Heart left ventricle (tissue), 16 donors: ENCODE measurements at regions of chr2 and their contacts with region 1.

Region 1: GRCh38 chr2:66429071-66429477 is 5.9 kb upstream of the MEIS1 start:
- DNase-seq: peak in 1 of 5 donors; percentile 18
- ATAC-seq: no peak
- H3K4me3 ChIP-seq: no peak overlapping the region
- H3K27ac ChIP-seq: peak overlapping the region in 1 of 12 donors; percentile 6
- H3K4me1 ChIP-seq: peaks cover 0 to 17% (median 5%) of the 10 kb centered on the region in 12 donors
- H3K27me3 ChIP-seq: peaks cover 0 to 75% (median 40%) of the 10 kb centered on the region in 9 donors
- CTCF ChIP-seq: peak; percentile 55 to 86 (median 72)
- POLR2A ChIP-seq: no peak

Region 2: GRCh38 chr2:65432227-65433190 is 996.6 kb before region 1 on chr2 and contains the start of gene SPRED2:
- intact Hi-C with region 1: no loop called
- DNase-seq: peak; percentile 95 to 97 (median 97)
- ATAC-seq: peak; percentile 55 to 77 (median 62)
- H3K4me3 ChIP-seq: peak within 1 kb of the TSS; percentile 58 to 98 (median 89)
- H3K27ac ChIP-seq: peak within 1 kb of the TSS; percentile 88 to 98 (median 92)
- H3K4me1 ChIP-seq: peaks cover 0 to 46% (median 28%) of the 10 kb centered on the region in 12 donors
- H3K27me3 ChIP-seq: peaks cover 0 to 4% (median 0%) of the 10 kb centered on the region in 9 donors
- CTCF ChIP-seq: peak in 4 of 12 donors; percentile 17 to 41 (median 26)
- POLR2A ChIP-seq: peak in 1 of 2 donors; percentile 66
- total RNA-seq, gene SPRED2: 10.2 to 24.4 (median 17.5) TPM

Region 3: DNA sequence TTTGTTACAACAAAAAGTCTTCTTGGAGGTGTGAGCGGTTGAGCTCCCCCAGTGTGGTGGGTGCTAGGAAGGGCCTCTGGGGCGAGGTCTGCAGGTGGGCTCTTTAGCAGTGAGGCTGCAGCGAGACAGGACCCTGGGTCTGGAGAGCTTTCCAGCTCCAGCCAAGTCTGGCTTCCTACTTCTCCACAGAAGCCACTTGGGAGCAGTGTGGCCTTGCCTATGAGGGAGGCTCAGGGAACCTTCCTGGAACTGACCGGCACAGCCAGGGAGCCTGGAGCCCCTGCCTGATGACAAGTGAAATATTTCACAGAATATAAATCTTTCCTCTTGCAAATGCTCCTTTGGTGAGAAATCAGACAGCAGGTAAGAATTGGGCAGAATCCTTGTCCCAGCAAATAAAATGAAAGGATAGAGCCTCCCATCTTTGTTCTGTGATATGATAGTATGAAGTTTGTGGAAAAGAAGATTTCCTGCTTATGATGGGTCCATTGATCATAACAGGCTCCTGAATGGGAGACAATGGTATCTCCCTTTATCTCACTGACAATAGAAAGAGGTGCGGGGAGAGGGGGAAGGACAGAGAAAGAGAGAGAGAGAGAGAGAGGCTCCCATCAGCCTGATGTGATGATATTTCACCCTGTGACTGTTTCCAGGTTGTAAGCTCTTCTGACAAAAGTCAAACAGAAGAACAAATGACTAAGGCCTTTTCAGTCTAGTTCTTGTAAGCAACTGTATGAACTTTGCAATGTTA is 706.9 kb before region 1 on chr2:
- intact Hi-C with region 1: loop called in 4 of 10 experiments (anchors 10 kb)
- DNase-seq: peak; percentile 33 to 63 (median 47)
- ATAC-seq: peak; percentile 86 to 92 (median 89)
- H3K4me3 ChIP-seq: no peak overlapping the region
- H3K27ac ChIP-seq: no peak overlapping the region
- H3K4me1 ChIP-seq: no peaks in the 10 kb centered on the region
- H3K27me3 ChIP-seq: peaks cover 0 to 5% (median 0%) of the 10 kb centered on the region in 9 donors
- CTCF ChIP-seq: peak in 11 of 12 donors; percentile 7 to 60 (median 41)
- POLR2A ChIP-seq: no peak

Region 4: DNA sequence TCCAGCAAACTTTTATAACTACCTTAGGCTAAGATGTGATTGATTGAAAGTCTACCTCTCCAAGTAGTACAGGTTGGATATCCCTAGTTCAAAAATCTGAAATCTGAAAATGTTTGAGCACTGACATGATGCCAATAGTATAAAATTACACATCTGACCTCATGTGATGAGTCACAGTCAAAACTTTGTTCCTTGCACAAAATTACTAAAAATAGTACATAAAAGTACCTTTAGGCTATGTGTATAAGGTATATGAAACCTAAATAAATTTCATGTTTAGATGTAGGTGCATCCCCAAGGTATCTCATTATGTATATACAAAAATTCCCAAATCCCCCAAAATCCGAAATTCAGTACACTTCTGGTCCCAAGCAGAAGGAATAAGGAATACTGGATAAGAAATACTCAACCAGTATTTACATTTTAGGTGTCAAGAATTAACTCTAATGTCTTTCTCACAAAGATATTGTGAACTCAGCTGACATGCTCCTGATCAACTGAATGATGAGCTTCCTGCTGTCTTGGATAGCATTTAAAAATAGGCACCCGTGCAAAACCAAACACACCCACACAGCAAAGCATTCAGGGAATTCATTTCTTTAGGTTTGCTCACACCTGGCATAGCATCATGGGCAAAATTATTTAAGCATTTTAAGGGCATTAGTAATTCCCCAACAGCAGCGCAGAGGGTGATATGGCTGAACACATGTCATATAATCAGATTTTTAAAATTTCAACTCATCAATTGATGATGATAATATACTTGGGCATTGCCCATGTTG is 491.5 kb before region 1 on chr2:
- intact Hi-C with region 1: no loop called
- DNase-seq: no peak
- ATAC-seq: no peak
- H3K4me3 ChIP-seq: no peak overlapping the region
- H3K27ac ChIP-seq: no peak overlapping the region
- H3K4me1 ChIP-seq: no peaks in the 10 kb centered on the region
- H3K27me3 ChIP-seq: peaks cover 0 to 7% (median 0%) of the 10 kb centered on the region in 9 donors
- CTCF ChIP-seq: no peak
- POLR2A ChIP-seq: no peak

Region 5: DNA sequence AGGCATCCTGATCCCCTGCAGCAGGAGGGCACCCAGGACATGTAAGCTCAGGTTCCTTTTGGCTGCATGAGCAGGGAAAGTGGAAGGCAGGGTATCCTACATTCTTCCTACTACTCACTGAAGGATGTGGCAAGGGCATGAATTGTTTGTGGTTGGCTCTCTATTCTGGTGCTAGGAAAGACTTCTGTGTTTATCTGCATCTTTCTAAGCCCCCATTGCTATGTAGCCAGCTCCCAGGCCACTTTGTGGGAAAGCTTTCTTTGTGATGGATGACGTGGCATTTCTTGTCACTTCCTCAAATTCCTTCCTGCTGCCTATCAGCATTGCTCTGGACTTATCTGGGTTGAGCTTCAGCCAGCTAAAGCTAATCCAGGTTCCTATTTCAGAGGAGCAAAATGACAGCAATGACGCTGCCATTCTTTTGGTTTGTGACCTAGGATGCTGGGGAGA is 52.1 kb after region 1 on chr2:
- intact Hi-C with region 1: no loop called
- DNase-seq: peak in 3 of 5 donors; percentile 23 to 51 (median 29)
- ATAC-seq: peak; percentile 14 to 86 (median 82)
- H3K4me3 ChIP-seq: no peak overlapping the region
- H3K27ac ChIP-seq: peak overlapping the region in 11 of 12 donors; percentile 7 to 72 (median 56)
- H3K4me1 ChIP-seq: peaks cover 4 to 52% (median 29%) of the 10 kb centered on the region in 12 donors
- H3K27me3 ChIP-seq: no peaks in the 10 kb centered on the region
- CTCF ChIP-seq: no peak
- POLR2A ChIP-seq: no peak

Region 6: DNA sequence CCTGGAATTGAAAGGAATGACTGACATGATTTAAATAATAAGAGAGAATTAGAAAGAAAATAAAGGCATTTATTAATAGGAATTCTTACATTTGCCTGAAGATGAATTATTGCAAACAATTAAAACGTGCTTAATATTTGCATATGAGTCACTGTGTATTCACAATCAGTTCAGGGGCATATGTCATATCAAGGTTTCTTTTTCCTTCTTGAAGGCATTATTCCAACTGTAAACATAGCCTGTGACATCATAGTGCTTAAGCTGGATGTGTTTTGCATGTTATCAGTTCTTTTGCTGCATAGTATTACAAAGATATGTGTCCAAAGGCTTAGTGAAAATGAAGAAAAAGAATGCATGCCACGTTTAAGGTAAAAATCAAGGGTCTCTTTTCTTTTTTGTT is 86.7 kb after region 1 on chr2:
- intact Hi-C with region 1: no loop called
- DNase-seq: no peak
- ATAC-seq: no peak
- H3K4me3 ChIP-seq: no peak overlapping the region
- H3K27ac ChIP-seq: no peak overlapping the region
- H3K4me1 ChIP-seq: peaks cover 0 to 10% (median 0%) of the 10 kb centered on the region in 12 donors
- H3K27me3 ChIP-seq: no peaks in the 10 kb centered on the region
- CTCF ChIP-seq: no peak
- POLR2A ChIP-seq: no peak

Region 7: DNA sequence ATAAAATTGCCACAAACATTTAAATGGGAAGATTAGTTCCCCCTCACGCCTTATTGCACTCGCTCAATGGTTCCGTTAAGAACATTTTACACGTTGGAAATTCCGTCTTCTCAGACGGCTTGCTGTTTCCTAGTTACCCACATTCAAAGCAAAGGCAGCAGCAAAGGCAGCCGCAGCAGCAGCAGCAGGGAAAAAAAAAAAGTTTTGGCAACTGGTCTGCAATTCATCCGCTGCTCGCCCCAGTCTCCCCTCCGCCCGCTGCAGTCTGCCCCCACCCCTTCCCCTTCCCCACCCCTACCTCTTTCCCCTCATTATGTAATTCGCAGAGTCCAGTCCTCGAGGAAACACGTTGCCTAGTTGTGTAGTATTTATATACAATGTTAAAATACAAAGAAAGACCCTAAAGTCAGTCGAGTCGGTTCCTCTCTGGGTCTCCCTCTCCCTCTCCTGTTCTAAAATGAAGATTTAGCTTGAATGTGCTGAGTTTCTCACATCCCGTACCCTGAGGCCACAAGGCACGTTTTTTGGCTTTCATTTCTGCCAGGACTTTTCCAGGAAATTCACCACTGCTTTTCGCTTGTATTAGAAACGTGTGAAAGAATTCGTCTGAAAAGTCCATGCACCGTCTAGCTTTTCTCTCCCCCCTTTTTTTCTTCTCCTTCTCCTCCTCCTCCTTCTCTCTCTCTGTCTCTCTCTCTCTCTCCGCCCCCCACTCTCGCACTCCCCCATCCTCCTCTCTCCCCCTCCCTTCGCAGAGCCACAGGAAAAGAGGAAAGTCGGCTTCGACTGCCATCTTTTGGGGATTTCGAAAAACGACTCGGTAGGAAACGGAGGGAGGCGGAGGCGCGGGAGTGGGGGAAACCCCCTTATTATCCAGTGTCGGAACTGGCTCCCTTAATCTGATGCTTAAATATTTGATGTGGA is 145.9 kb after region 1 on chr2:
- intact Hi-C with region 1: loop called in 9 of 10 experiments (anchors 1 to 5 kb)
- DNase-seq: peak; percentile 46 to 68 (median 61)
- ATAC-seq: peak; percentile 51 to 81 (median 71)
- H3K4me3 ChIP-seq: peak overlapping the region; percentile 27 to 66 (median 52)
- H3K27ac ChIP-seq: peak overlapping the region in 5 of 12 donors; percentile 27 to 97 (median 53)
- H3K4me1 ChIP-seq: peaks cover 0 to 35% (median 25%) of the 10 kb centered on the region in 12 donors
- H3K27me3 ChIP-seq: peaks cover 36 to 63% (median 46%) of the 10 kb centered on the region in 9 donors
- CTCF ChIP-seq: peak in 11 of 12 donors; percentile 28 to 63 (median 46)
- POLR2A ChIP-seq: no peak

Region 8: DNA sequence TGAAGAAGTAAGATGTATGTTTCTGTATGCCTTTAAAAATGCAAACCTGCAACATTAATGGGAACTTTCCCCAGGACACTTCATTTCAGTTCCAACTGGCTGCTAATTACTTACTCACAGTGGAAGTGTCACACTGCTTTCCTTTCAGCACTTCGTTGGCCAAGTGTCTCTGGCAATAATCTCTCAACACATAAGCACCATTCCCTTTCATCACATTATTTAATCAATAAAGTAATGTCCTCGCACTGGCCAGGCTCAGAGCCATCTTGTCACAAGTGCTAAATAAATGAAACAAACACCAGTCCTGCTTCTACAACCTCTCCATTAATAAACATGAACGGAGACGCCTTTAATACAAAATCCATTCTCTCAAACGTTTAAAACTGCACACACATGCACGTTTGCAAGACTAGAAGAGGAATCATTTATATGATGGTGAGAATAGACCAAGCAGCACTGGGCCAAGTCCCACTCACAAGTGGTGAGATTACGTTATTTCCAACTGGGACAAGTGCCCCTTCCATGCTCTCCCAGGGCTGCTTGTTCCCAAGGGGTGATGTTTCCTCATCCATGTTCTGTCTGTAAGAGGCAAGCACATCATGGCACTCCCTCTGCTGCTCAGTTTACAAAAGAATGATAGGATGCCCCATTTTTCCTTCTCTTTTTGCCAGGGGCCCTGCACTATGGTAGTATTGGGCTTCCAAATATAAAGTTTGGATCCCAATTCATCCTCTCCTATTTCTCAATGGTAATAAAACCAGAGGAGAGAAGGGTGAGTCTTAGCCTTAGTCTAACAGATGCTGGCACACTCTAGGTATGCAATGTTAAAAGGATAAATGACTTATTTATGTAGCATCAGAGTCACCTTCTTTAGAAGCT is 911.3 kb after region 1 on chr2:
- intact Hi-C with region 1: loop called in 1 of 10 experiments (anchors 5 kb)
- DNase-seq: peak in 4 of 5 donors; percentile 10 to 67 (median 42)
- ATAC-seq: peak; percentile 96 to 98 (median 98)
- H3K4me3 ChIP-seq: no peak overlapping the region
- H3K27ac ChIP-seq: no peak overlapping the region
- H3K4me1 ChIP-seq: peaks cover 0 to 15% (median 1%) of the 10 kb centered on the region in 12 donors
- H3K27me3 ChIP-seq: peaks cover 0 to 7% (median 0%) of the 10 kb centered on the region in 9 donors
- CTCF ChIP-seq: peak in 1 of 12 donors; percentile 11
- POLR2A ChIP-seq: no peak

Region 9: DNA sequence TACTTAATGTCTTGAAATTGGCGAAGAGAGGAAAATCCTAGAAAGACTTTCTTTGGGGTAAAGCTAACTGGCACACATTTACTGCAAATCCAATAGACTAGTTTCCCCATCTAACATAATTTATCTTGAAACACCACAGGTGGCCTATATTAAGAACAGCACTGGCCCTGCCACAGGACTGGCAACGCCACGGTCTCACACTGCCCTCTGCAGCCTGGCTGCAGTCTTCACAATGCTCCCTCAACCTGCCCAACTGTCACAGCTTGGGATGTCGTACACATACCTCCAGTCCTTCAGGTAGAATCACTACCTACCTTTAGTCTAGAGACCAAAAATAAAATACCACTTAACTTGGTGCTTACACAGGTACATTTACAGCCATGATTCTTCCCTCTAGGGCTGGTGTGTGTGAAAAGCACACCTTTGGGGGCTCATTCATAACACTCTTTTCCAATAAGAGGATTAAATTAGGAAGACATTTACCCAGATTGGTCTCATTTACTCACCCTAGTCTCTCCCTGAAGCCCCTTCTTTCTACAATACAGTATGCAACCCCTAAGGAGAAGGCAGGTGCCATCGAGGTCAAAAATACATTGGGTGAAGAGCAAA is 1411.5 kb after region 1 on chr2:
- intact Hi-C with region 1: loop called (anchors 2 to 10 kb)
- DNase-seq: peak; percentile 61 to 82 (median 70)
- ATAC-seq: peak; percentile 94 to 99 (median 98)
- H3K4me3 ChIP-seq: no peak overlapping the region
- H3K27ac ChIP-seq: no peak overlapping the region
- H3K4me1 ChIP-seq: no peaks in the 10 kb centered on the region
- H3K27me3 ChIP-seq: peaks cover 0 to 4% (median 0%) of the 10 kb centered on the region in 9 donors
- CTCF ChIP-seq: peak; percentile 56 to 84 (median 74)
- POLR2A ChIP-seq: no peak